ENCODE measurements at regions of chr2 and their contacts with region 1.

Region 1: GRCh38 chr2:215888680-215889079 is 124.7 kb downstream of the MREG start:
- DNase-seq: no peak
- ATAC-seq: peak; percentile 63
- H3K4me3 ChIP-seq: no peak overlapping the region
- H3K27ac ChIP-seq: no peak overlapping the region
- H3K4me1 ChIP-seq: peaks cover 5% of the 10 kb centered on the region
- H3K27me3 ChIP-seq: no peaks in the 10 kb centered on the region
- CTCF ChIP-seq: no peak
- EP300 ChIP-seq: no peak
- POLR2A ChIP-seq: no peak
- RAD21 ChIP-seq: no peak

Region 2: DNA sequence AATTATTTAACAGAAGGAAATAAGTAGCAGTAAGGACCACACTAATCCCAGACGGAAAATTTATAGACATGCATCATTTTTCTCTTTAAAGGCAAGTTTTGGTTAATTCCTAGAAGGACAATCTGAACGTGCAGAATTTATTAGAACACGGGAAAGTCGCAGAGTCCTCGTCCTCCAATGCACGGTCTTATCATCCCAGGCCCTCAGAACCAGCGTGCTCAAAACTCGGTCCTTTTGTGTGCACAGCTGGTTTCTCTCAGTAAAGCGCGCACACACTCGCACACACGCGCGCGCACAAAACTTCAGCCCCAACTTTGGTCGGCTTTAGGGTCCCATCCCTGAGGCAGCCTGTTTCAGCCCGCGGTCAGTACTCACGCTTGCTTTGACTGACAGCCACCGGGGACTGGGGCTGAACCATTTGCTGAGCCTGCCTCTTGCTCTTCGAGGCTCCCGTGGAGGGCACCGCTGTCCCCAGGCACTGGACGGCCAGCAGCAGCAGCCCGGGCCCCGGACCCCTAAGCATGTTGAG is 453.3 kb before region 1 on chr2:
- CTCF ChIA-PET with region 1: no interaction called
- POLR2A ChIA-PET with region 1: no interaction called
- RAD21 ChIA-PET with region 1: no interaction called
- SMC1A ChIA-PET with region 1: no interaction called
- in situ Hi-C with region 1: no loop called
- intact Hi-C with region 1: no loop called
- DNase-seq: no peak
- ATAC-seq: peak; percentile 68
- H3K4me3 ChIP-seq: peak overlapping the region; percentile 68; the same call in 1 of the 2 replicates
- H3K27ac ChIP-seq: no peak overlapping the region
- H3K4me1 ChIP-seq: no peaks in the 10 kb centered on the region
- H3K27me3 ChIP-seq: peaks cover 0 to 14% of the 10 kb centered on the region in 2 experiments; a peak in 2 of 4 replicates
- CTCF ChIP-seq: no peak
- EP300 ChIP-seq: no peak
- POLR2A ChIP-seq: no peak
- RAD21 ChIP-seq: no peak

Region 3: DNA sequence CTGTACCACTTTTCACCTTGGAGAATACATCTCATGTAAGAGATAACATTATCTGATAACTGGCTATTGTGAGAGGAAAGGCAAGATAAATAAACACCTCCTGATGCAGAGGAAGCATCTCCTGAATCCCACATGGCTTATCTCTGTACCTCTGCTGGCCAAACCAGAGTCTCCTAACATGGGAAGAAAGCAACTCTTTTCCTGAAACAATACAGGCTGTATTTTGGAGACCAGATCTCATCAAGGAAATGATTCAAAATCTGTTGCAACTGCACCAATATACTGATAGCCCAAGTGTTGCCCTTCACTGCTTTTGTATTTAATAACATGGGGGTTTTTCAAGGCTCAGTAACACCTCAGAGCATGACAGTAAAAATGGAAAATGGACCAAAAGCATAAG is 17.8 kb after region 1 on chr2:
- CTCF ChIA-PET with region 1: interaction called, 7 read pairs
- POLR2A ChIA-PET with region 1: interaction called, 5 read pairs
- RAD21 ChIA-PET with region 1: interaction called, 4 read pairs
- SMC1A ChIA-PET with region 1: interaction called, 185 read pairs
- in situ Hi-C with region 1: no loop called
- intact Hi-C with region 1: no loop called
- DNase-seq: no peak
- ATAC-seq: no peak
- H3K4me3 ChIP-seq: no peak overlapping the region
- H3K27ac ChIP-seq: no peak overlapping the region
- H3K4me1 ChIP-seq: no peaks in the 10 kb centered on the region
- H3K27me3 ChIP-seq: no peaks in the 10 kb centered on the region
- CTCF ChIP-seq: no peak
- EP300 ChIP-seq: no peak
- POLR2A ChIP-seq: no peak
- RAD21 ChIP-seq: no peak

Region 4: GRCh38 chr2:215929602-215930334 is 41.1 kb after region 1 on chr2:
- CTCF ChIA-PET with region 1: no interaction called
- POLR2A ChIA-PET with region 1: no interaction called
- RAD21 ChIA-PET with region 1: no interaction called
- SMC1A ChIA-PET with region 1: no interaction called
- in situ Hi-C with region 1: no loop called
- intact Hi-C with region 1: no loop called
- DNase-seq: no peak
- ATAC-seq: peak; percentile 57
- H3K4me3 ChIP-seq: no peak overlapping the region
- H3K27ac ChIP-seq: no peak overlapping the region
- H3K4me1 ChIP-seq: peaks cover 4% of the 10 kb centered on the region; the same call in 1 of the 2 replicates
- H3K27me3 ChIP-seq: no peaks in the 10 kb centered on the region
- CTCF ChIP-seq: no peak
- EP300 ChIP-seq: no peak
- POLR2A ChIP-seq: no peak
- RAD21 ChIP-seq: no peak

Region 5: DNA sequence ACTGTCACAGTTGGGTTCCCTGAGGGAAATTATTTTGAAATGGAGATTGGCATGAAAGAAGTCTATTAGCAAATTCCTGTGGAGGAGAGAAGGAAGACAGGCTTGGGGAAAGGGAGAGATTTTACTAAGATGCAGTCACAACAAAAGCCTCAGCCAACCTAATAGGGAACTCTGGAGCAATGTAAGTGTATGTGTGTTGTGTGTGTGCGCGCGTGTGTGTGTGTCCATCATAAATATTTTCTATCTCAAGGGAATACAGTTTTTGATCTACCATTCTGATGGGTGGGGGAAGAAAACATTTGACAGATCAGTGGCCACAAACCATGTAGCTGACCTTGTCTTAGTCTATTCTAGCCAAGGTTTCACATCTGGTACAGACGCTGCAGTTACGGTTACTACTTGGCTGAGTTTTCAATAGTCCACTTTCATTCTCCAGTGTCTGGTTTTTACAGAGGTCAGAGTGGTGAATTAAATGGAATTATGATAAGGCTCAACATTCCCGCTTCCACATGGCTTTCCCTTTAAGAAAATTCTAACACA is 52.0 kb after region 1 on chr2:
- CTCF ChIA-PET with region 1: no interaction called
- POLR2A ChIA-PET with region 1: no interaction called
- RAD21 ChIA-PET with region 1: no interaction called
- SMC1A ChIA-PET with region 1: no interaction called
- in situ Hi-C with region 1: no loop called
- intact Hi-C with region 1: no loop called
- DNase-seq: no peak
- ATAC-seq: no peak
- H3K4me3 ChIP-seq: no peak overlapping the region
- H3K27ac ChIP-seq: no peak overlapping the region
- H3K4me1 ChIP-seq: no peaks in the 10 kb centered on the region
- H3K27me3 ChIP-seq: no peaks in the 10 kb centered on the region
- CTCF ChIP-seq: no peak
- EP300 ChIP-seq: no peak
- POLR2A ChIP-seq: no peak
- RAD21 ChIP-seq: no peak

Region 6: GRCh38 chr2:217035967-217036366 is 1147.3 kb after region 1 on chr2:
- CTCF ChIA-PET with region 1: no interaction called
- POLR2A ChIA-PET with region 1: no interaction called
- RAD21 ChIA-PET with region 1: no interaction called
- SMC1A ChIA-PET with region 1: no interaction called
- in situ Hi-C with region 1: no loop called
- intact Hi-C with region 1: no loop called
- DNase-seq: no peak
- ATAC-seq: no peak
- H3K4me3 ChIP-seq: no peak overlapping the region
- H3K27ac ChIP-seq: no peak overlapping the region
- H3K4me1 ChIP-seq: no peaks in the 10 kb centered on the region
- H3K27me3 ChIP-seq: no peaks in the 10 kb centered on the region; a peak in 1 of 4 replicates
- CTCF ChIP-seq: no peak
- EP300 ChIP-seq: no peak
- POLR2A ChIP-seq: no peak
- RAD21 ChIP-seq: no peak

Measured in GM12878 (cell line).